Lower leg skin (tissue), 4 donors: ENCODE measurements at regions of chr15 and their contacts with region 1.

Region 1: GRCh38 chr15:81485806-81486205 is 111.8 kb upstream of the TMC3 start:
- DNase-seq: no peak
- H3K4me3 ChIP-seq: no peak overlapping the region
- CTCF ChIP-seq: no peak
- POLR2A ChIP-seq: no peak

Region 2: DNA sequence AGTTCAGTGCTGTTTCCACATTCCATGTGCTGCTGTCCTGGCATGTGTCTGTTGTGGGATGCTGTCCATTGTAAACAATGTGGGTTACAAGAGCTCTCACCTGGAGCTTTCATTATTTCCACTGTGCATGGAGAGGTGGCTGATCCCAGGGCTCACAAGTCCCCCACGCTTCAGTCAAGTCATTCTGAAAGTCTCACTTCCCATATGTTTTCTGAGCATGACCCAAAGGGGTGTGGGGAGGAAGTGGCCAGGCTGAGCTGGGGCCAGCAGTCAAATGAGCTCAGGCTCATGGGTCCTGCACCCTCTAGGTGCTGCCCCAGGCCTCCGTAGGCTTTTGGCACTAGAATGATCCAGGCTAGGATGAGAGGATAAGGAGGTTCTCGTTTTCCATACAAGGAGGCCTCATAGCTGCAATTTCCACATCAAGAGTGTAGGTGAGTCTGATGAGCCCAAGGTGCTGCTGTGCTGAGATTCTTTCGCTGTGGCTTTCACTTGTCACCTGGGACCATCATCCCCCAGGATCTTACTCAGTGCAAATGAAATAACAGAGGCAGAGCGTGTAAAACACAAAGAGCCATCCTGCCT is 183.9 kb before region 1 on chr15:
- intact Hi-C with region 1: no loop called
- DNase-seq: peak in 1 of 2 donors; percentile 78
- H3K4me3 ChIP-seq: no peak overlapping the region
- CTCF ChIP-seq: no peak
- POLR2A ChIP-seq: no peak

Region 3: DNA sequence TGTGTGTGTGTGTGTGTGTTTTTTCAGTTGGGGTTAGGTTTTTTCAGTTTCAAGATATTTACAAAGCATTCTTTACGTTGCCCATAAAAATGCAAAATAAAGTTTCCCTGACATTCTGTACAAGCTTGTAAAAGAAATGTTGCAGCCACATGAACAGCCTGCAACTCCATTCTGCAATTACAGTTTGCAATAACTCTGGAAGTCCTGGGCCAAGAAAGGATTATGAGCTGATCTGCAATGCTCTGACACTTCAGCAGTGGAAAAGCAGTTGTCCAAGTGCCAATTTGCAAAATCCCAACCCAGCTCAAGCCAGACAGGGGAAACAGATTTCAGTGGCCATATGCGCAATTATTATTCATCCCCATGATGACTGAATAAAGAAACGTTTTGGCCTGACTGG is 237.9 kb after region 1 on chr15:
- intact Hi-C with region 1: no loop called
- DNase-seq: peak in 1 of 2 donors; percentile 43
- H3K4me3 ChIP-seq: no peak overlapping the region
- CTCF ChIP-seq: no peak
- POLR2A ChIP-seq: no peak

Region 4: DNA sequence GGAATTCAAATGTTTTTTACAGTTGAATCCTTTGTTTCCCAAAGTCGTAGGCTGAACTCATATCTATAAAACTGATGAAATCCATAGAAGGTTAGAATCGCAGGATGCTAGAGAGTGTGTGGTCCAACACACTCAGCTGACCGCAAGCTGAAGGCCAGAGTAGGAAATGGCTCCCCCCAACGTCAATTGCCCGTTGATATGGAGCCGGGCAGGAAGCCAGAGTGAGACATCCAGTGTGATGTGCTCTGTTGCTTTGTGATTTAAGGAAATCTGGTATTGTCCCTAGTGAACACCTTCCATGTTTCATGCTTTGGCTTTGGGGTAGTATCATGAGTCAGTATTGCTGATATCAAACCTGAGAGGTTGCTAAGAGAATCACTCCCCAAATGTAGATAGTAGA is 565.9 kb after region 1 on chr15:
- intact Hi-C with region 1: loop called (anchors 5 kb)
- DNase-seq: peak in 1 of 2 donors; percentile 8
- H3K4me3 ChIP-seq: no peak overlapping the region
- CTCF ChIP-seq: no peak
- POLR2A ChIP-seq: no peak